Heart right ventricle (tissue), 16 donors: ENCODE measurements at regions of chr19 and their contacts with region 1.

Region 1: GRCh38 chr19:18450931-18451845 is 13.3 kb upstream of the ISYNA1 start:
- DNase-seq: peak; percentile 86 to 91
- ATAC-seq: peak; percentile 78 to 91 (median 86)
- H3K4me3 ChIP-seq: no peak overlapping the region
- H3K27ac ChIP-seq: no peak overlapping the region
- H3K4me1 ChIP-seq: peaks cover 0 to 17% (median 9%) of the 10 kb centered on the region in 9 donors
- H3K27me3 ChIP-seq: no peaks in the 10 kb centered on the region
- CTCF ChIP-seq: peak; percentile 97 to 99 (median 98)

Region 2: DNA sequence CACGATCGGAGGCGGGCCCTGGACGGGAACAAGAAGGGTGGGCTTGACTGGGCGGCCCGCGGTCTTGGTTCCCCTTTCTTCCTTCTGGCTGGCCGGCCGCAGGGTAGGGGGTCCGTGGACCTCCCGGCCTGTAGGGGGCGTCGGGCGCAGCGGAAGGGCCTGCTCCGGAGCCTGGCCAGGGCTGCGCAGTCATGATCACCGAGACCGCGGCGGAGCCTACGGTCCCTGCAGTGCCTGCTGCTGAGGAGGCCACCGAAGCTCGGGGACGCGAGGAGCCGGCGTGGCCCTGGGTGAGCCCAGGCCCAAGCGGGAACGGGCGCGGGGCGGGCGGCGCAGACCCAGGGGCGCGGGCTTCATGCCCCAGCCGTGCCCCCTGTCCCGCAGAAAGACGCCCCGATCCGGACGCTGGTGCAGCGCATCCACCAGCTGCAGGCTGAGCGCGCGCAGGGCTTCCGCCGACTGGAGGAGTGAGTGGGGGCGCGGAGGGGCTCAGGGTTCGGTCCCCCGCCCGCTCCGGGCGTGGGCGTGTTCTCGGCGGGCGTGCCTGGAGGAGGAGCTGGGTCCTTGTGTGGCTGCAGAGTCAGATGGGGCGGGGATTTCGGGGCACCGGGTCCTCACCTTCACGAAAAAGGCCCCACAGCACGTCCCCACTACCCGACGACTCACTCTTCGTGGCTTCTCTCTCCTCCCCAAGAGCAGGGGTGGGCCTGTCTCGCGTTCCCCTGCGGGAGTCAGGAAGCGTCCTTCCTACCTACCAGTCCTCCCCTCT is 137.6 kb after region 1 on chr19 and contains the start of gene REX1BD:
- intact Hi-C with region 1: no loop called
- DNase-seq: peak; percentile 88 to 89
- ATAC-seq: peak; percentile 87 to 95 (median 94)
- H3K4me3 ChIP-seq: peak within 1 kb of the TSS; percentile 63 to 95 (median 86)
- H3K27ac ChIP-seq: peak within 1 kb of the TSS; percentile 55 to 97 (median 92)
- H3K4me1 ChIP-seq: peaks cover 0 to 46% (median 23%) of the 10 kb centered on the region in 9 donors
- H3K27me3 ChIP-seq: no peaks in the 10 kb centered on the region
- CTCF ChIP-seq: peak; percentile 83 to 98 (median 92)
- total RNA-seq, gene REX1BD: 63.4 to 96.3 (median 68.7) TPM

Region 3: GRCh38 chr19:18846862-18847548 is 395.8 kb after region 1 on chr19:
- intact Hi-C with region 1: loop called in 5 of 10 experiments (anchors 5 to 10 kb)
- DNase-seq: peak; percentile 77 to 83
- ATAC-seq: peak; percentile 70 to 79 (median 75)
- H3K4me3 ChIP-seq: no peak overlapping the region
- H3K27ac ChIP-seq: peak overlapping the region in 8 of 10 donors; percentile 58 to 92 (median 86)
- H3K4me1 ChIP-seq: peaks cover 29 to 94% (median 76%) of the 10 kb centered on the region in 9 donors
- H3K27me3 ChIP-seq: no peaks in the 10 kb centered on the region
- CTCF ChIP-seq: peak; percentile 65 to 93 (median 89)

Region 4: GRCh38 chr19:20028611-20029010 is 1577.4 kb after region 1 on chr19:
- intact Hi-C with region 1: no loop called
- DNase-seq: no peak
- ATAC-seq: no peak
- H3K4me3 ChIP-seq: no peak overlapping the region
- H3K27ac ChIP-seq: no peak overlapping the region
- H3K4me1 ChIP-seq: no peaks in the 10 kb centered on the region
- H3K27me3 ChIP-seq: no peaks in the 10 kb centered on the region
- CTCF ChIP-seq: no peak